Right ventricle myocardium inferior (tissue), 1 donor: ENCODE measurements at regions of chr1 and their contacts with region 1.

Region 1: DNA sequence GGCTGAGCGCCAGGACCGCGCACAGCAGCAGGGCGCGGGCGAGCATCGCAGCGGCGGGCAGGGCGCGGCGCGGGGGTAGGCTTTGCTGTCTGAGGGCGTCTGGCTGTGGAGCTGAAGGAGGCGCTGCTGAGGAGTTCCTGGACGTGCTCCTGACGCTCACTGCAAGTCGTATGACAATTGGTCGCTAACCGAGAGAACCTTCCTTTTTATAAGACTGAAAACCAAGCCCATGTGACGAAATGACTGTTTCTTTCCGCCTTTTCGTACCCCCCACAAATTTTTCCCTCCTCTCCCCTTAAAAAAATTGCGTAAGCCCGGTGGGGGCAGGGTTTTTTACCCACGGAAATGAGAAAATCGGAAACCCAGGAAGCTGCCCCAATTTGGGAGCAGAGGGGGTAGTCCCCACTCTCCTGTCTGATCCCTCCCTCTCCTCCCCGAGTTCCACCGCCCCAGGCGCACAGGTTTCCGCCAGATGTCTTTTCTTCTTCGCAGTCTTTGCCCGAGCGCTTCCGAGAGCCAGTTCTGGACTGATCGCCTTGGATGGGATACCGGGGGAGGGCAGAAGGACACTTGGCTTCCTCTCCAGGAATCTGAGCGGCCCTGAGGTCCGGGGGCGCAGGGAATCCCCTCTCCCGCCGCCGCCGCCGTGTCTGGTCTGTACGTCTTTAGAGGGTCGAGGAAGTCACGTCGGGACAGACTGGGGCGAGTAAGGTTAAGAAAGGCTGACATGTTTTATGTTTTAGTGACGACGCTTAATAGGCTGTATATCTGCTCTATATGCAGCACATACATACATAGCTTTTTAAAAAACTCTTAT is at the start of gene PTGS2:
- DNase-seq: peak; percentile 86
- ATAC-seq: peak; percentile 97
- total RNA-seq, gene PTGS2: 0.32 TPM

Region 2: GRCh38 chr1:186482661-186483255 is 197.7 kb before region 1 on chr1:
- intact Hi-C with region 1: loop called (anchors 5 kb)
- DNase-seq: peak; percentile 52
- ATAC-seq: no peak

Region 3: DNA sequence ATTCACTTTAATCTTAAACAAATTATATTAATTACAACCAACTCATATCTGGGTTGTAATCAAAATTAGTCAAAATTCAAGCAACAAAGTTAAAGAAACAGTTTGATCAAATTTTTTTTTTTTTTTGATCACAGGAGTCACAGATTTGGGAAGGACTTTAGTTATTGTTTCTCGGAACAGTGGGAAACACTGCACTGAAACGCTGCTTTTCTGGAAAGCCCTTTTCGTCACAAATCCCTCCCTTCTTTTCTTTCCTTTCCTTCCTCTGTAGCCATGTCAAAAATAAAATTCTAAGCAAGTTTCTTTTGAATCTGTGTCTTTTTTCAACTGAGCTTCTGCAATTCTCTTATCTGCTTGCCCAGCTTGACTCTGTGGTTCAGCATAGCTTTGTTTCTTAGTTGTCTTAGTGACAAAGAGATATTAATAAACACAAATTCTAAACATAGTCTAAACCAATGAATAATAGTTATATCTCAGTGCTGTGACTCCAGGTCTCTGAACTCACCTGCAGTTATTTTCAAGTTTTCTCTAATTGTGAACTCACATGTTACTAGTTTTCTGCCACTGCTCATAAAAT is 54.0 kb before region 1 on chr1:
- intact Hi-C with region 1: loop called (anchors 5 kb)
- DNase-seq: no peak
- ATAC-seq: peak; percentile 84

Region 4: GRCh38 chr1:186700712-186701111 is 20.3 kb after region 1 on chr1:
- intact Hi-C with region 1: no loop called
- DNase-seq: no peak
- ATAC-seq: no peak

Region 5: GRCh38 chr1:188170411-188170810 is 1490.0 kb after region 1 on chr1:
- intact Hi-C with region 1: no loop called
- DNase-seq: no peak
- ATAC-seq: no peak